AG04449 (cell line): ENCODE measurements at regions of chr17 and their contacts with region 1.

Region 1: DNA sequence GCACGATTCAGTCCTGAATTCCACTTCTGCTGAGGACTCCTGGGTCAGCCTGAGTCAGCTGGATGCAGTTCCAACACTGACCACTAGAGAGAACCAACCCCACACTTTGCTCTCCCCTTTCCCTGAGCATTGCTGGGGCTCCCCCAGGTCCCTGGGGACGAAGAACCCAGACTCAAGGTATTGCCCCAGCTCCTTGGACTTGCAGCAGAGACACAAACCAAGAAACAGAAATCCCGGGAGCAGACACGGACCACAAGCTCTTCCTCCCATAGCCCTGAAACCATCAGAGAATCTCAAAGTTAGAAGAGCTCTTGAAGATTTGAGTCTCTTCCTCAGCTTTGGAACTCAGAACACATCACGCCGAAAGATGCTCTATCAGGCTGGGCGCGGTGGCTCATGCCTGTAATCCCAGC is 678 bp upstream of the GH1 start:
- DNase-seq: no peak
- H3K4me3 ChIP-seq: no peak overlapping the region
- CTCF ChIP-seq: peak; percentile 89

Region 2: DNA sequence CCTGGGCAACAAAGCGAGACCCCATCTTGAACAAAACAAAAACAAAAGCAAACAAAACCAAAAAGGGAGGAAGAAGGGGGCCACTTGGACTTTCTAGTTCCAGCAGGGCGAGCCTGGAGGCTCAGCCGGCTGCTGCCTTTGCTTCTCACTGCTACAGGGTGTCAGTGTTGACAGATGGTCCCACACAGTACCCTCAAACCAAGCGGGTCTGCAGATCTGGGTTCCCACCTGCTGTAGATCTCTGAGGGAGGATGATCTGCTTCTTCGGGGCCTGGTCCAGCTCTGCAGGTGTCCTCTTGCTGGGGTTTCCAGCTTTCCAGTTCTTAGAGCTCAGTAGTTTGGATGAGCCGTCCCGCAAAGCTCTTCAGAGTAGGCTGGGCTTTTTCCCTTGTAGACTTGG is 15.0 kb before region 1 on chr17:
- CTCF ChIA-PET with region 1: interaction called, 31 read pairs
- POLR2A ChIA-PET with region 1: no interaction called
- DNase-seq: no peak
- H3K4me3 ChIP-seq: no peak overlapping the region
- CTCF ChIP-seq: no peak

Region 3: DNA sequence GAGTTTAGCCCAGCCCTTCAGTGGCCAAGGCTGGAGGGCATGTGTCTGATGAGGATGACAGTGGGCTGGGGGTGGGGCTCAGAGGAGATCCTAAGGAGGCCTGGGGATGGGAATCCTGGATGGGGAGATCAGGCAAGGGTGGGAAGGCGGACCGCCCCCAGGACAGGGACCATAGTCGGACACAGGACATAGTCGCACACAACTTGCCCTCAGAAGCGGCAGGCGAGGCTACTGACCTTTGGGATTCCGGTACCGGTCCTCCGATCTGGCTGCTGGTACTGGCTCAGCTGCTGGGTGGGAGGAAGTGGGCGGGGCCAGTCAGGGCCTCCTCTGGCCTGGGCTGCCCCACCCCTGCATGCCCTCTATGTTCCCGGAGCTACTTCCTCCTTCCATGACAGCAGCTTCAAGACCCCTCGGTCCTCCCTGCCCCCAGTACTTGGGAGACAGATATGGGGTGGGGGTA is 11.8 kb after region 1 on chr17:
- CTCF ChIA-PET with region 1: interaction called, 55 read pairs
- POLR2A ChIA-PET with region 1: no interaction called
- DNase-seq: no peak
- H3K4me3 ChIP-seq: no peak overlapping the region
- CTCF ChIP-seq: no peak

Region 4: DNA sequence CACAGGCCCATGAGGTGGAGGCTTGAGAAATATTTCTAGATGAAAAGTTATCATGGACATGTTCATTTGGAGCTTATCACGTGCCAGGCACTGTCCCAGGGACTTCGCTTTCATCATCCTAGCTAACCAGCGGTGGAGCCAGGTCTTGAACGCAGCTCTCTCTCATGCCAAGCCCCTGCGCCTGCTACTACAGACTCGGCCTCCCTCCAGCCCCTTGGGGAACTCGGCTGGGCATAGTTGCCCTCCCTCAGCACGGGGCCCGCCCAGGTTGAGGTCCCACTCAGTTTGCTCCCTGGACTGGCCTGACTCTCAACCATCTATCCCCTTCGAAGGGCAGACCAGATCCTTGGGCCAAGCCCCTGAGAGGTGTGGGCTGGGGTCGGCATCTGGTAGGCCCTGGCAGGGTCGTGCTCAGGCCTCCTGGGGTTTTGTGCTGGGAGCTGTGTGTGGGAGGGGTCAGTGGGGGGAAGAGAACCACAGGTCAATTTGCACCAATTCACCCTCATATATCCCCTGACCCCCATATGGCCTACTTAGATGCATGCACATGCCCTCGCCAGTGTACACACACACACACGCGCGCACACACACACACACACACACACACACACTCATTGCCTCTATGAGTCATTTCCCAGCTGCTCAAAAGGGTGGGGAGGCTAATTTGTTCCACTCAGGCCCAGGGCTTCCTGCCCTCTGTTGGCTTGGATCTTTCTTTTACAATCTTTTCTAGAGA is 65.5 kb after region 1 on chr17:
- CTCF ChIA-PET with region 1: interaction called, 27 read pairs
- POLR2A ChIA-PET with region 1: no interaction called
- DNase-seq: peak; percentile 77
- H3K4me3 ChIP-seq: no peak overlapping the region
- CTCF ChIP-seq: no peak

Region 5: DNA sequence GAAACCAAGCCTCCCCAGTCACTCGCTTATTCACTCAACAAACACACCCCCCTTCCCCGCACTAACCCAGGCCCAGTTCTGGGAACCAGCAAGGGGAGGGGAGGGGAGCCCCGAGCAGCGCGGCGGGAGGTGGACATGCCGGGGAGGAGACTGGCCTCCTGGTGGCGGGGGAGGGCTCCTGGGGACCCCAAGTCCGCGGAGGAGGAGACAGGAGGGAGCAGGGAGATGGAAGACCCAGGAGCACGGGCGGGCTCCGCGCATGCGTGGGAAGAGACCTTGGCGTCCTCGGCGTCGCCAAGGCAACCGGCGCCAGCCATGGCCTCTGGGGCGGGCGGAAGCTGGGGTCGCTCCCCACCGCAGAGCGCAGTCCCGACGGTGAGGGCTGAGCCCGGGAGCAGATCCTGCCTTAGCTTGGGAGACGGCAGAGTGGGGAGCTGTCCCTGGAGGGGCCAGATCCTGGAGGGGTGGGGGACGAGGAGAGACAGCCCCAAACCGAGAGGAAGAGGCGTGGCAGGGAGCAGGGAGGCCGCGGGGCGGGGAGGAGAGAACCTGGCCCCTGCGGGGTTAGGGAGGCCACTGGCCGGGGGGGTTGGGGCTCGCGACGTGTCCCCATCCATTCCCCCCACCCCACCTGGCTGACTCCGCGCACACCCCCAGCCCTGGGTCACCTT is 78.9 kb after region 1 on chr17 and contains the start of gene PRR29:
- CTCF ChIA-PET with region 1: interaction called, 21 read pairs
- POLR2A ChIA-PET with region 1: no interaction called
- DNase-seq: no peak
- H3K4me3 ChIP-seq: peak within 1 kb of the TSS; percentile 71
- CTCF ChIP-seq: no peak

Region 6: GRCh38 chr17:64020056-64020766 is 100.9 kb after region 1 on chr17 and contains the start of gene ICAM2:
- CTCF ChIA-PET with region 1: interaction called, 246 read pairs
- POLR2A ChIA-PET with region 1: no interaction called
- DNase-seq: no peak
- H3K4me3 ChIP-seq: peak within 1 kb of the TSS; percentile 20; the same call in 1 of the 2 replicates
- CTCF ChIP-seq: no peak